ENCODE measurements at regions of chr20 and their contacts with region 1.

Region 1: DNA sequence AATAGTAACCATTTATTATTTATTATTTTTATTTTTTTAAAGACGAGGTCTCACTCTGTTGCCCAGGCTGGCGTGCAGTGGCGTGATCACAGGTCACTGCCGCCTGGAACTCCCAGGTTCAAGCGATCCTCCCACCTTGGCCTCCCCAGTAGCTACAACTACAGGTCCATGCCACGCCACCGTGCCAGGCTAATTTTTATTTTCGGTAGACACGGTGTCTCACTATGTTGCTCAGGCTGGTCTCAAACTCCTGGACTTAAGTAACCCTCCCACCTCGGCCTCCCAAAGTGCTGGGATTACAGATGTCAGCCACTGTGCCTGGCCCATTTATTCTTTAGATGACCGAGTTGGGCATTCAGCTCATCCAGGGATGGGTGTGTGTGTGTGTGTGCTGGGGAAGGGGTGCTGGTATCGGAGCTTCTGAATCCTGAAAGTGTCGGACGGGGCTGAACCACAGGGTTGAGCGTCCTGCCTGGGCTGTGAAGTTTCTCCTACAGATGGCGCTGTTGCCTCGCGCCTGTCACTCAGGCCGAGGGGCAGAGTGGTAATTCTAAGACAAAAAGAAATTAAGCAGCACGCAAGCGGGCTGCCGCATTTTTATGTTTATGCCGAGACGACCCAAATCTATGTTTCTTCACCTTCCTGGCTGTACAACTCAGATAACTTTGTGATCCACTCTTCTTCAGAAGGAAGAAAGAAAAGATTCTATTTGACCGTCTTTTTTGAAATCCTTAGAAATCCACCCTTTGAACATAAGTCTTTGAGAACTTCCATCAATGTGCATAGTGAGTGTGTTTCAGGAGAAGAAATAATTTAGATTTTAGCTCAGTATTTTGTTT is 252.8 kb downstream of the CDH26 start:
- DNase-seq: peak; percentile 46 to 80 (median 64)
- ATAC-seq: peak; percentile 78 to 87 (median 81)
- H3K4me3 ChIP-seq: no peak overlapping the region
- H3K27ac ChIP-seq: no peak overlapping the region
- H3K4me1 ChIP-seq: peaks cover 0 to 15% (median 0%) of the 10 kb centered on the region in 12 donors
- H3K27me3 ChIP-seq: peaks cover 0 to 3% (median 0%) of the 10 kb centered on the region in 9 donors
- CTCF ChIP-seq: peak; percentile 79 to 90 (median 87)
- POLR2A ChIP-seq: no peak

Region 2: GRCh38 chr20:60057123-60057801 is 153.7 kb before region 1 on chr20:
- intact Hi-C with region 1: loop called in 5 of 10 experiments (anchors 5 to 10 kb)
- DNase-seq: peak; percentile 56 to 73 (median 65)
- ATAC-seq: peak in 3 of 4 donors; percentile 44 to 61 (median 58)
- H3K4me3 ChIP-seq: peak overlapping the region in 1 of 12 donors; percentile 50
- H3K27ac ChIP-seq: peak overlapping the region in 2 of 12 donors; percentile 26 to 80
- H3K4me1 ChIP-seq: peaks cover 0 to 57% (median 17%) of the 10 kb centered on the region in 12 donors
- H3K27me3 ChIP-seq: peaks cover 0 to 5% (median 0%) of the 10 kb centered on the region in 9 donors
- CTCF ChIP-seq: peak; percentile 77 to 91 (median 86)
- POLR2A ChIP-seq: no peak

Region 3: DNA sequence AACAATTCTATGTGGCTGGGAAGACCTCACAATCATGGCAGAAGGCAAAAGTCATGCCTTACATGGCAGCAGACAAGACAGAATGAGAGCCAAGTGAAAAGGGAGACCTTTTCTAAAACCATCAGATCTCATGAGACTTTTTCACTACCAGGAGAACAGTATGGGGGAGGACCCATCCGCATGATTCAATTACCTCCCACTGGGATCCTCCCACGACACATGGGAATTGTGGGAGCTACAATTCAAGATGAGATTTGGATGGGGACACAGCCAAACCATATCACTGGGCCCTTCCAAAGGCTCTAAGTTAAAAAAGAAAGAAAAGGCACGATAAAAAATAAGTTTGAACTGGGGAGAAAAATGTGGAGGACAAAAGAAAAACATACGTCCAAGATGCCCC is 634.1 kb after region 1 on chr20:
- intact Hi-C with region 1: loop called in 1 of 10 experiments (anchors 10 kb)
- DNase-seq: no peak
- ATAC-seq: no peak
- H3K4me3 ChIP-seq: no peak overlapping the region
- H3K27ac ChIP-seq: no peak overlapping the region
- H3K4me1 ChIP-seq: no peaks in the 10 kb centered on the region
- H3K27me3 ChIP-seq: peaks cover 0 to 7% (median 0%) of the 10 kb centered on the region in 9 donors
- CTCF ChIP-seq: no peak
- POLR2A ChIP-seq: no peak

Region 4: GRCh38 chr20:61220160-61220559 is 1009.2 kb after region 1 on chr20:
- intact Hi-C with region 1: loop called in 1 of 10 experiments (anchors 5 kb)
- DNase-seq: no peak
- ATAC-seq: no peak
- H3K4me3 ChIP-seq: no peak overlapping the region
- H3K27ac ChIP-seq: no peak overlapping the region
- H3K4me1 ChIP-seq: no peaks in the 10 kb centered on the region
- H3K27me3 ChIP-seq: peaks cover 0 to 36% (median under 1%) of the 10 kb centered on the region in 9 donors
- CTCF ChIP-seq: no peak
- POLR2A ChIP-seq: no peak

Region 5: GRCh38 chr20:61253264-61253639 is 1042.3 kb after region 1 on chr20:
- intact Hi-C with region 1: loop called in 1 of 10 experiments (anchors 10 kb)
- DNase-seq: no peak
- ATAC-seq: peak in 2 of 4 donors; percentile 41 to 46
- H3K4me3 ChIP-seq: peak overlapping the region; percentile 20 to 55 (median 39)
- H3K27ac ChIP-seq: no peak overlapping the region
- H3K4me1 ChIP-seq: peaks cover 0 to 24% (median 2%) of the 10 kb centered on the region in 12 donors
- H3K27me3 ChIP-seq: peaks cover 16 to 72% (median 52%) of the 10 kb centered on the region in 9 donors
- CTCF ChIP-seq: peak in 5 of 12 donors; percentile 8 to 36 (median 16)
- POLR2A ChIP-seq: no peak

Region 6: DNA sequence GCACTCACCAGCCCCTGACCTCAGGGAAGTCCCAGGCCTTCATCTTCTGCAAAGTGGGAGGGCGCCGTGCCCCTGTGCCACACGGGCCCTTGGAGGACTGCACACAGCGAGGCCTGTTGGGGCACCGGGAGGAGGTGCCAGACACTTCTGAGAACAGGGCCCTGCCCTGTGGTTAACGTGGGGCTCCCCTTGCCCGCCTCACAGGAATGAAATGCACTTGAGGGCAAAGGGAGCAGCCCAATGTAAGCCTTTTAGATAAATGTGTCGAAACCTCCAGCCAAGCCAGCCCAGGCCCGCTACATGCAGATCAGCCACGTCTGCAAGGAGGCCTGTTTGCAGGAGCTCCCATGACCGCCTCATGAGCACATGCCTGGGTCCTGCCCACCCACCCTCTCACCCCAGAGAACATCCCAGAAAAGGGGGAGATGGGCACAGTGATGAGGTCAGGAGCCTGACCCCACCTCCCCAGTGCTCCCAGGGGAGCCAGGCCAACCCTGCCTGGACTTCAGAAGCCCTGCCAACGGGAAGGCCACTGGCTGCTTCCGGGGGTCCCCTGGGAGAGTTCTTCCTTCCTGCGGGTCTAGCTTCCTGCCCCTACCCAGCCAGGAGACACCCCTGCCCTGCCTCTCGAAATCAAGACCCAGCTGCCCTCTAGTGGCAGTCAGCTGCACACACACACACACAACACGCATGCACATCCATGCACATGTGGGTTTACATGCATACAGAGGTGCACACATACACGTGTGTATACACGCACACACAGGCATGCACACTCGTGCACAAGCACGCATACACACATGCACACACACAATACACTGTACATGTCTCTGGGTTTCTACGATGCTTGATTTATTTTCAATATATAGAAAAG is 1676.0 kb after region 1 on chr20:
- intact Hi-C with region 1: loop called in 4 of 10 experiments (anchors 5 to 10 kb)
- DNase-seq: peak in 1 of 5 donors; percentile 60
- ATAC-seq: peak in 2 of 4 donors; percentile 39 to 62
- H3K4me3 ChIP-seq: no peak overlapping the region
- H3K27ac ChIP-seq: no peak overlapping the region
- H3K4me1 ChIP-seq: peaks cover 0 to 4% (median 0%) of the 10 kb centered on the region in 12 donors
- H3K27me3 ChIP-seq: peaks cover 0 to 55% (median 5%) of the 10 kb centered on the region in 9 donors
- CTCF ChIP-seq: peak; percentile 45 to 67 (median 54)
- POLR2A ChIP-seq: no peak